SK-N-SH (cell line): ENCODE measurements at regions of chr1 and their contacts with region 1.

Region 1: DNA sequence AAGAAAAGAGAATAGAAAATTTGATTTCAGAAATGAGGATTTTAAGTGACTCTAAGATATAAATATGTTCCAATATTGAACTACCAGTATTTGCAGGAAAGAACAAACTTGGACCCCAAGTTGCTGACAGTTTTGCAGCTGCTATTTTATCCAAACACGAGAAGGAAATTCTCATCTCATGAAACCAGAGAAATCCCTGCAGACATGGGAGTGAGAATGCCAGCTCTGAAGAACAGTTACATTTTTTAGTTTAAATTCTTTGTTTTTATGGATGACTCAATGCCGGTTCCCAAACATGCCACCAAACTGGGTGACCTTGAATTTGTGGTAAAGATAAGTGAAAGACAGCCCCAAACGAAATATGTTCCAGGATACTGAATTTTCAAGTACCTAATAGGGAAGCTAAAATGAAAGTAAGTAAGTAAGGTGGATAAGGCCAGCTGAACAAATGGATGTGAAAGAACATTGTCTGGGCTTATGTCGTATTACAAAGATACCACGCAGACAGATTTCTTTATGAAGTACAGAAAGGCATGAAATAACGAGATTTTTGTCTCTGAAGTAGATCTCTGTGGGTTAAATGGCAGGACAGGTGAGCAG is 19.9 kb downstream of the TLR5 start:
- DNase-seq: no peak
- H3K4me3 ChIP-seq: no peak overlapping the region
- H3K27ac ChIP-seq: no peak overlapping the region
- H3K4me1 ChIP-seq: peaks cover 0 to 9% of the 10 kb centered on the region in 2 experiments; a peak in 1 of 4 replicates
- H3K27me3 ChIP-seq: no peaks in the 10 kb centered on the region; the same call in 1 of the 2 replicates
- CTCF ChIP-seq: no peak
- EP300 ChIP-seq: no peak
- RAD21 ChIP-seq: no peak

Region 2: GRCh38 chr1:222736972-222737371 is 386.1 kb before region 1 on chr1 and contains the start of gene FAM177B:
- CTCF ChIA-PET with region 1: interaction called, 13 read pairs
- POLR2A ChIA-PET with region 1: no interaction called
- DNase-seq: no peak
- H3K4me3 ChIP-seq: no peak within 1 kb of the TSS
- H3K27ac ChIP-seq: no peak within 1 kb of the TSS
- H3K4me1 ChIP-seq: no peaks in the 10 kb centered on the region
- H3K27me3 ChIP-seq: no peaks in the 10 kb centered on the region
- CTCF ChIP-seq: no peak
- EP300 ChIP-seq: no peak
- RAD21 ChIP-seq: no peak
- polyA plus RNA-seq, gene FAM177B: not detected in 2 replicates

Region 3: GRCh38 chr1:222792744-222793143 is 330.4 kb before region 1 on chr1:
- CTCF ChIA-PET with region 1: interaction called, 46 read pairs
- POLR2A ChIA-PET with region 1: interaction called, 3 read pairs
- DNase-seq: peak; percentile 68
- H3K4me3 ChIP-seq: no peak overlapping the region
- H3K27ac ChIP-seq: no peak overlapping the region
- H3K4me1 ChIP-seq: no peaks in the 10 kb centered on the region; a peak in 1 of 4 replicates
- H3K27me3 ChIP-seq: no peaks in the 10 kb centered on the region
- CTCF ChIP-seq: peak; percentile 78
- EP300 ChIP-seq: no peak
- RAD21 ChIP-seq: peak; percentile 93

Region 4: GRCh38 chr1:223097713-223098112 is 25.4 kb before region 1 on chr1:
- CTCF ChIA-PET with region 1: interaction called, 19 read pairs
- POLR2A ChIA-PET with region 1: no interaction called
- DNase-seq: no peak
- H3K4me3 ChIP-seq: no peak overlapping the region
- H3K27ac ChIP-seq: no peak overlapping the region
- H3K4me1 ChIP-seq: peaks cover 0 to under 1% of the 10 kb centered on the region in 2 experiments; a peak in 1 of 4 replicates
- H3K27me3 ChIP-seq: no peaks in the 10 kb centered on the region; the same call in 1 of the 2 replicates
- CTCF ChIP-seq: no peak
- EP300 ChIP-seq: no peak
- RAD21 ChIP-seq: no peak

Region 5: GRCh38 chr1:223109581-223110026 is 13.5 kb before region 1 on chr1:
- CTCF ChIA-PET with region 1: interaction called, 37 read pairs
- POLR2A ChIA-PET with region 1: no interaction called
- DNase-seq: no peak
- H3K4me3 ChIP-seq: no peak overlapping the region
- H3K27ac ChIP-seq: no peak overlapping the region
- H3K4me1 ChIP-seq: no peaks in the 10 kb centered on the region
- H3K27me3 ChIP-seq: peaks cover 37% of the 10 kb centered on the region
- CTCF ChIP-seq: no peak
- EP300 ChIP-seq: no peak
- RAD21 ChIP-seq: no peak

Region 6: GRCh38 chr1:223142795-223143536 is 19.9 kb after region 1 on chr1 and contains the start of gene TLR5:
- CTCF ChIA-PET with region 1: interaction called, 21 read pairs
- POLR2A ChIA-PET with region 1: no interaction called
- DNase-seq: peak; percentile 90
- H3K4me3 ChIP-seq: peak within 1 kb of the TSS; percentile 63 to 67
- H3K27ac ChIP-seq: no peak within 1 kb of the TSS; a peak in 1 of 4 replicates
- H3K4me1 ChIP-seq: peaks cover 0 to 9% of the 10 kb centered on the region in 2 experiments; a peak in 2 of 4 replicates
- H3K27me3 ChIP-seq: no peaks in the 10 kb centered on the region
- CTCF ChIP-seq: peak; percentile 73
- EP300 ChIP-seq: no peak
- RAD21 ChIP-seq: no peak
- polyA plus RNA-seq, gene TLR5: 0.02 TPM in 1 of 2 replicates, not detected in the other